ENCODE measurements at regions of chr19 and their contacts with region 1.

Region 1: GRCh38 chr19:33521480-33522370 is at the start of gene PEPD:
- DNase-seq: peak; percentile 96
- ATAC-seq: peak; percentile 96
- H3K4me3 Mint-ChIP-seq: peak within 1 kb of the TSS; percentile 80
- H3K27ac Mint-ChIP-seq: peak within 1 kb of the TSS; percentile 94
- H3K4me1 Mint-ChIP-seq: peaks cover 28% of the 10 kb centered on the region
- H3K27me3 Mint-ChIP-seq: no peaks in the 10 kb centered on the region; the same call in 1 of the 2 replicates
- CTCF ChIP-seq: no peak
- total RNA-seq, gene PEPD: 76.5 to 83.1 TPM (median 78.6 TPM) in 3 replicates

Region 2: DNA sequence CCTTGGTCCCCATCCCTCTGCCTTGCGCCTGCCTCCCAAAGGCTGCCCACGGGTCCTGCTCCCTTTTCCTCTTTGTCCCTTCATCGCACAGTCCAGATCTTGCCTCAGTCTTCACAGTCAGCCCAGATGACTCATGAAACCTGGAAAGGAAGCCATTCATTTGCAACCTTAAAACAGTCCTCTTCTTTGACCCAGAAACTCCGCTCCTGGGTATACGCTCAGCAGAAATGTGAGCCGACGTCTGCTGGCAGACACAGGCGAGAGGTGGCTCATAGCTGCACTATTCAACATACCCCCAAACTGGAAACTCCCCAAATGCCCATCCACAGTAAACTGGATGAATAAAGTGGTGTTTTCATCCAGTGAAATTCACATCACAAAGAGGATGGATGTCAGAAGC is 13.5 kb after region 1 on chr19:
- CTCF ChIA-PET with region 1: interaction called, 4 read pairs
- POLR2A ChIA-PET with region 1: interaction called, 11 read pairs
- DNase-seq: no peak
- ATAC-seq: no peak
- H3K4me3 Mint-ChIP-seq: no peak overlapping the region
- H3K27ac Mint-ChIP-seq: no peak overlapping the region
- H3K4me1 Mint-ChIP-seq: peaks cover 8% of the 10 kb centered on the region
- H3K27me3 Mint-ChIP-seq: peaks cover 6% of the 10 kb centered on the region; the same call in 1 of the 2 replicates
- CTCF ChIP-seq: no peak

Measured in WTC11 (cell line).